Activated CD8-positive, alpha-beta T cell treated with anti-CD3 and anti-CD28 coated beads, Interleukin-2, amount 10 ng/mL, durations not matched to agents 7 days and 5 days (primary cell): ENCODE measurements at regions of chr19 and their contacts with region 1.

Region 1: DNA sequence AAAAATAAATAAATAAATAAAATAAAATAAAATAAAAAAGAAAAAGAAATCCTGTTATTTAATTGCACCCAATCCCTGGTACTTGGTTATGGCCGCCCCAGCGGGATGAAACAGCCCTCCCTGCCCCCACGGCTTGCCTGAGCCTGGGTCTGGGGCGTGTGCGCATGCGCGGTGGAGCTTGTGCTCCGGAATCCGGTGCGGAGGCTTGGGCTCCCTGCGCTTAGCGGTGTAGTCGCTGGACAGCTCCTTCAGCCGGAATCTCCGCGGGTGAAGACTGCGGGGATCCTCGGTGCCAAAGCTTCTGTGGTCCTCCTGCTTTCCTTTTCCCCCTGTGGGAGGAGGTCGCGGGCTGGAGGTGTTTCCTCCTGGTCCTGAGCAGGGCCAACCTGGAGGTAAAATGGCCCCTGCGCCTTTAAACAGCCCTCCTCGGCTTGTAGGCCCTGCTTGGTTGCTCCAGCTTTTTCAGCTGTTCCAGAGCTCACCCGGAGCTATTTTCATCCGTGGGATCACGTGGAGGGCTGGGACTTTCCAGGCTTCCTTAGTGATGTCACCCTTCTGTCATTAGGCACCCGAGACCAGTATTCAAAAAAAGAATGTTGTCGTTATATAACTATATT is at the start of gene PLA2G4C:
- DNase-seq: peak; percentile 84
- ATAC-seq: peak; percentile 89
- H3K4me3 Mint-ChIP-seq: peak within 1 kb of the TSS; percentile 71
- H3K27ac Mint-ChIP-seq: peak within 1 kb of the TSS; percentile 75
- H3K4me1 Mint-ChIP-seq: peaks cover 14% of the 10 kb centered on the region
- H3K27me3 Mint-ChIP-seq: no peaks in the 10 kb centered on the region
- total RNA-seq, gene PLA2G4C: 0.73 to 1.8 TPM

Region 2: GRCh38 chr19:48123907-48124651 is 13.6 kb after region 1 on chr19:
- CTCF ChIA-PET with region 1: interaction called, 11 read pairs
- POLR2A ChIA-PET with region 1: interaction called, 11 read pairs
- DNase-seq: no peak
- ATAC-seq: no peak
- H3K4me3 Mint-ChIP-seq: no peak overlapping the region
- H3K27ac Mint-ChIP-seq: no peak overlapping the region
- H3K4me1 Mint-ChIP-seq: peaks cover 15% of the 10 kb centered on the region
- H3K27me3 Mint-ChIP-seq: no peaks in the 10 kb centered on the region

Region 3: GRCh38 chr19:48152551-48152950 is 42.1 kb after region 1 on chr19:
- CTCF ChIA-PET with region 1: interaction called, 50 read pairs
- POLR2A ChIA-PET with region 1: no interaction called
- DNase-seq: peak; percentile 77
- ATAC-seq: peak; percentile 49
- H3K4me3 Mint-ChIP-seq: no peak overlapping the region
- H3K27ac Mint-ChIP-seq: no peak overlapping the region
- H3K4me1 Mint-ChIP-seq: peaks cover 4% of the 10 kb centered on the region
- H3K27me3 Mint-ChIP-seq: no peaks in the 10 kb centered on the region